ENCODE measurements at regions of chr21 and their contacts with region 1.

Region 1: GRCh38 chr21:44932408-44933181 is 7.2 kb upstream of the SLX9 start:
- DNase-seq: peak; percentile 74
- ATAC-seq: peak; percentile 73

Region 2: GRCh38 chr21:44093761-44094160 is 838.8 kb before region 1 on chr21:
- intact Hi-C with region 1: no loop called
- DNase-seq: no peak
- ATAC-seq: no peak

Region 3: DNA sequence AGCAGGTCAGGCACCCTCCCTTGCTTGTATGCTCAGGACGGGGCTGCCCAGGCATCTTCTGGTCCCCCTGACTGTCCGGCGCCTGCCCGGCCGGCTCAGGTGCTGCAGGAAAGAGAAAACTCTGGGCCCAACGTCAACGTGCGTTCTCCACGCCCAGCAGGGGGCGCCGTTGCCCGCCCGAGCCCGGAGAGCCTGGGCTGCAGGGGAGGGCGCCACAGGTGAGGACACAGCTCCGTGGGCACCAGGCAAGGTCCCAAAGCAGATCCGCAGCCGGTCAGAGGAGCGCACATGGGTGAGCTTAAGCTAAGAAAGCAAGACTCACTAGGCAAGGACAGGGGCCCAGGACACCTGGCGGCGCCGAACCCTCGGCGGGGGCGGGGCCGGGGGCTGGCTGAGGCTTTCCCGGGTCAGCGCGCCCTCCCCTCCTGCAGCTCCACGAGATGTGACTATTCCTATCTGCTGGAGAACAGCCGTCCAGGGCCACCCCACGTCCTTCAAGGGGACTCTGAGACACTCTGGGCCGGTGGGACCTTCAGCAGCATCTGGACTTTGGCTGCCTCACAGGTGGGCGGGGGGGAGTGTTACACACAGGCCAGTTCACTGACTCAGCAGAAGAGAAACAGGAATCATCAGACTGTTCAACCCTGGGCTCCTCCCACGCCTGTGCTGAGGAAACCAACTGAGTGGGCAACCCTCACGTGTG is 421.9 kb before region 1 on chr21:
- intact Hi-C with region 1: no loop called
- DNase-seq: peak; percentile 67
- ATAC-seq: peak; percentile 71

Region 4: GRCh38 chr21:44686000-44686781 is 246.4 kb before region 1 on chr21:
- intact Hi-C with region 1: no loop called
- DNase-seq: no peak
- ATAC-seq: no peak

Region 5: GRCh38 chr21:44892536-44893277 is 39.9 kb before region 1 on chr21:
- intact Hi-C with region 1: loop called (anchors 2 kb)
- DNase-seq: peak; percentile 85
- ATAC-seq: peak; percentile 80